Transverse colon (tissue), 4 donors: ENCODE measurements at regions of chr12 and their contacts with region 1.

Region 1: DNA sequence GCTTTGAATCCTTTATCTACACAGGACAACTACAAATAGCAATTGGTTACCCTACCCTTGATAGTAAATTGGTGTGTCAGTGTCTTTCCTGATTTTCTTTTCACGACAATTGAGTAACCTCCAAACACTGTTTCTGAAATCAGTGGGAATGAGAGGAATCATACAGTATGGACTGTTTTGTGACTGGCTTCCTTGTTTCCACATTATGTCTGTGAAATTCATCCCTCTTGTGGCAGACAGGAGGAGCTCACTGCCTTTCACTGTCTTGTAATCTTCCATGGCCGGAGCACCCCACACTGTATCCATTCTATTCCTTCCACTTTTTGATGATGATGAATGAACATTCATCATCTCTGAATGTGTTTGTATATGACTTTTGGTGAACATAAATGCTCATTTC is 164.0 kb upstream of the PZP start:
- DNase-seq: no peak
- H3K4me3 ChIP-seq: no peak overlapping the region
- H3K27ac ChIP-seq: no peak overlapping the region
- H3K4me1 ChIP-seq: no peaks in the 10 kb centered on the region
- H3K27me3 ChIP-seq: no peaks in the 10 kb centered on the region
- CTCF ChIP-seq: peak in 1 of 5 experiments; percentile 33
- EP300 ChIP-seq: no peak
- POLR2A ChIP-seq: no peak

Region 2: DNA sequence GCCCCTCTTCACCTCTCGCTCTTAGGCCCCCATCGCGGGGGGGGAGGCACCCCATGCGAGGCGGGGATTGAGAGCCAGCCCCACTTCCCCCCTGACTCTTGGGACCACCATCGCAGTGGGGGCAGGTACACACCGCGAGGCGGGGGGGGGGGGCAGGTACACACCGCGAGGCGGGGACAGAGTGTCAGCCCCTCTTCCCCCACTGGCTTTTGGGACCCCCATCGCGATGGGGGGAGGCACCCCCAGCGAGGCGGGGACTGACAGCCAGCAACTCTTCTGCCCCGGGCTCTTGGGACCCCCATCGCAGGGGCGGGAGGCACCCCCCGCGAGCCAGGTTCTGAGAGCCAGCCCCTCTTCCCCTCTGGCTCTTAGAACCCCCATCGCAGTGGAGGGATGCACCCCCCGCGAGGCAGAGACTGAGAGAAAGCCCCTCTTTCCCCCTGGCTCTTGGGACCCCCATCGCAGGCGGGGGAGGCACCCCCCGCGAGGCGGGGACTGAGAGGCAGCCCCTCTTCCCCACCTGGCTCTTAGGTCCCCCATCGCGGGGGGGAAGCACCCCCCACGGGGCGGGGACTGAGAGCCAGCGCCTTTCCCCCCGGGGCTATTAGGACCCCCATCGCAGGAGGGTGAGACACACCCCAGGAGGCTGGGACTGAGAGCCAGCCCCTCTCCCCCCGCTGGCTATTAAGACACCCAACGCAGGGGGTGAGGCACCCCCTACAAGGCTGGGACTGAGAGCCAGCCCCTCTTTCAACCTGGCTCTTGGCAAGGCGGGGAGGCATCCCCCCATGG is 32.5 kb after region 1 on chr12:
- in situ Hi-C with region 1: no loop called
- intact Hi-C with region 1: loop called (anchors 1 kb)
- DNase-seq: no peak
- H3K4me3 ChIP-seq: no peak overlapping the region
- H3K27ac ChIP-seq: no peak overlapping the region
- H3K4me1 ChIP-seq: no peaks in the 10 kb centered on the region
- H3K27me3 ChIP-seq: no peaks in the 10 kb centered on the region
- CTCF ChIP-seq: no peak
- EP300 ChIP-seq: no peak
- POLR2A ChIP-seq: no peak